Activated B cell treated with CpG ODN at 0.5 μM for 24 hours (primary cell): ENCODE measurements at regions of chr12 and their contacts with region 1.

Region 1: GRCh38 chr12:22529281-22530060 is 14.9 kb downstream of the C2CD5 start:
- DNase-seq: no peak
- ATAC-seq: peak; percentile 64
- H3K4me3 Mint-ChIP-seq: no peak overlapping the region
- H3K27ac Mint-ChIP-seq: no peak overlapping the region
- H3K4me1 Mint-ChIP-seq: no peaks in the 10 kb centered on the region
- H3K27me3 Mint-ChIP-seq: no peaks in the 10 kb centered on the region
- CTCF ChIP-seq: no peak

Region 2: DNA sequence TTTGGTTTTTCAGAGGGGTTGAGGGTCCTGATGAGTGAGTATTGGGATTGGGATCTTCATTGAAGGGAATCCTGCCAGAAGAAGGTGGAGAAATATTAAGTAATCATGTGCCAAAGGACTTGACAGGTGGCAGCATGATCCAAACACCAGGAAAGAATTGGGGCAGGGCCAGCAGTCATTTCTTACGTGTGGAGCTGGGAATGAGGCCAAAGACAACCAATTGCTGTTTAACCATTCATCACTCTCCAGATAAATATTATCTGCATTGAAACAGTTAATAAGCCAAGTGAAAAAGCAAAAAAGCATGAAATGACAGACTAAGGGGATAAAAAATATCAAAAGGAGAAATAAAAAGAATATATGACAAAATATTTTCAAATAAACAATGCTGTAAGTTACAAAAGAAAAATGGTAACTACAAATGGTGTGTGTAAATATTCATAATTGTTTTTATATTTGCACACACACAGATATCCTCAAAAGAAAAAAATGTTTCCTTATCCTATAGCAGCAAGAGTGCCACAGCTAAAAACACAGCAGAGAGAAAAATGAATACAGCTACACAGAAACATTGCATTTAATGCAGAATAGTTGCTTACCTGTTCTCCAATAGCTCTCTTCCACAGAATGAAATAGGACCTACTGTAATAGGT is 11.3 kb before region 1 on chr12:
- CTCF ChIA-PET with region 1: no interaction called
- POLR2A ChIA-PET with region 1: no interaction called
- intact Hi-C with region 1: loop called (anchors 2 kb)
- DNase-seq: no peak
- ATAC-seq: no peak
- H3K4me3 Mint-ChIP-seq: no peak overlapping the region
- H3K27ac Mint-ChIP-seq: no peak overlapping the region
- H3K4me1 Mint-ChIP-seq: no peaks in the 10 kb centered on the region
- H3K27me3 Mint-ChIP-seq: no peaks in the 10 kb centered on the region
- CTCF ChIP-seq: no peak

Region 3: GRCh38 chr12:22631863-22632463 is 102.5 kb after region 1 on chr12:
- CTCF ChIA-PET with region 1: interaction called, 10 read pairs
- POLR2A ChIA-PET with region 1: interaction called, 3 read pairs
- intact Hi-C with region 1: loop called (anchors 1 kb)
- DNase-seq: no peak
- ATAC-seq: no peak
- H3K4me3 Mint-ChIP-seq: no peak overlapping the region
- H3K27ac Mint-ChIP-seq: no peak overlapping the region
- H3K4me1 Mint-ChIP-seq: peaks cover 66% of the 10 kb centered on the region
- H3K27me3 Mint-ChIP-seq: no peaks in the 10 kb centered on the region
- CTCF ChIP-seq: peak; percentile 52

Region 4: GRCh38 chr12:22670762-22671161 is 141.3 kb after region 1 on chr12:
- CTCF ChIA-PET with region 1: interaction called, 5 read pairs
- POLR2A ChIA-PET with region 1: no interaction called
- intact Hi-C with region 1: loop called (anchors 1 kb)
- DNase-seq: no peak
- ATAC-seq: no peak
- H3K4me3 Mint-ChIP-seq: no peak overlapping the region
- H3K27ac Mint-ChIP-seq: no peak overlapping the region
- H3K4me1 Mint-ChIP-seq: no peaks in the 10 kb centered on the region
- H3K27me3 Mint-ChIP-seq: no peaks in the 10 kb centered on the region
- CTCF ChIP-seq: no peak